ENCODE measurements at regions of chr22 and their contacts with region 1.

Region 1: DNA sequence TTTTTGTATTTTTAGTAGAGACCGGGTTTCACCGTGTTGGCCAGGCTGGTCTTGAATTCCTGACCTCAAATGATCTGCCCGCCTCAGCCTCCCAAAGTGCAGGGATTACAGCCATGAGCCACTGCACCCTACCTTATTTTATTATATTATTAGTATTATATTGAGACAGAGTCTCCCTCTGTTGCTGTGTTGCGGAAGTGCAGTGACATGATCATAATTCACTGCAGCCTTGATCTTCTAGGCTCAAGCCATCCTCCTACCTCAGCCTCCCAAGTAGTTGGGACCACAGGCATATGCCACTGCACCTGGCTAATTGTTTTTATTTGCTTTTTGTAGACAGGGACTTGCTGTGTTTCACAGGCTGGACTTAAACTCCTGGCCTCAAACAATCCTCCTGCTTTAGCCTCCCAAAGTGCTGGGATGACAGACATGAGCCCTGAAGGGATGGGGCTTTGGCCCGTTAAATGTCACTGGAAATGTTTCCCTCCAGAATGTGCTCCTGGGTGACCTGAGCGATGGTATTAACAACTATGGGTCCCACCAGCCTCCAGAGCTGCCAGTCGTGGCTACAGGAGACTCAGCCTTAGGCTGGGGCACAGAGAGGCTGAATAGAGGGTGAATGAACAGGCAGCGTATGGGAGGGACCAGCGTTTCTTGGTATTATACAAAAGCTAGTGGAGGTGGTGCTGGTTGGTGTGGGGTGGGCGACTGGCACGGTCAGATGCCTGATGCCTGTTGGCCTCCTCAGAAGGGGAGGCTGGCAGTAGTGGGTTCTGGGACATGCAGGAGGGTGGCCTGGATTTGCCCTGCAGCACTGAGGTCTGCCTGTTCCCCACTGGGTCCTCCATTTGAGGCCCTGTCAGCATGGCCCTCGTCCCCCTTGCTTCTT is 7.3 kb downstream of the TANGO2 start:
- DNase-seq: peak in 1 of 2 experiments; percentile 15
- ATAC-seq: peak; percentile 46 to 80; a peak in 3 of 6 replicates
- H3K4me3 ChIP-seq: no peak overlapping the region
- H3K27ac ChIP-seq: no peak overlapping the region
- H3K4me1 ChIP-seq: no peaks in the 10 kb centered on the region
- CTCF ChIP-seq: peak; percentile 17; the same call in 1 of the 3 replicates
- EP300 ChIP-seq: no peak
- POLR2A ChIP-seq: no peak
- RAD21 ChIP-seq: peak; percentile 31 to 41; a peak in 2 of 5 replicates

Region 2: DNA sequence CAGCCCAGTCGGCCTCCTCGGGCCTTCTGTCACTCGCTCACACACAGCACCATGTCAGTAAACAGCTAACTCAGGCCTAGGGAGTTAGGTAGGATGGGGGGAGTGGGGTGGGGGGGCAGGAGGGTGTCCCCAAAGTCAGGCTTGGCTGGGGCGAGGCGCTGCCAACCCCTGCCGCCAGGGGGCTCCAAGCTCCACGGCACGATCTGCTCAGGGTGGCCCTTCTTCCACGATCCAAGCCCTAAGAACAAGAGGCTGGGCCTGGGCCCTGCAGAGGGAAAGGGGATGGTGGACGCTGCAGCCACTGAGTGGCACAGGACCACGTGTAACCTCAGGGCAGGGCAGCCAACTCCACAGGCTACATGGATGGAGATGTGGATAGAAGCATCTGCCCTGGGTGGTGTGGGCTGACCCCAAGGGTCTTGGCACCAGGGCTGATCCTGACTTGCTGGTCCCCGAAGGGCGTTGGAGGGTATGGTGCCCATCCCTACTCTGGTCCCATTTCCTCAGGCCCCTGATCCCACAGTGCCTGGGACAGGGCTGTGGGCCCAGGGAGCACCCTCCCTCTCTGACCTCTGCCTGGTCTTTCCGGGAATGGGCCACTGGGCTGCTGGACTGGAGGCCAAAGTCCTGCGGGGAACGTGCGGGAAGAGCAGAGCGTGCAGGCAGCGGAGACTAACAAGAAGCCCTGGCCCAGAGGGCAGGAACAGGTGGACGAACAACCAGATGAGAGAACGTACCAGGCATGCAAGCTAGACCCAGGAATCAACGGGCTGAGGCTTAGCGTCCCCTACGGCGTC is 57.5 kb before region 1 on chr22:
- CTCF ChIA-PET with region 1: interaction called, 30 read pairs
- POLR2A ChIA-PET with region 1: no interaction called
- DNase-seq: peak; percentile 57 to 62
- ATAC-seq: peak; percentile 44 to 79
- H3K4me3 ChIP-seq: no peak overlapping the region
- H3K27ac ChIP-seq: no peak overlapping the region
- H3K4me1 ChIP-seq: peaks cover 5% of the 10 kb centered on the region; the same call in 1 of the 3 replicates
- CTCF ChIP-seq: peak; percentile 70
- EP300 ChIP-seq: no peak
- POLR2A ChIP-seq: no peak
- RAD21 ChIP-seq: peak; percentile 72 to 76

Region 3: GRCh38 chr22:20039683-20040325 is 11.6 kb after region 1 on chr22:
- CTCF ChIA-PET with region 1: interaction called, 10 read pairs
- POLR2A ChIA-PET with region 1: no interaction called
- DNase-seq: no peak
- ATAC-seq: no peak
- H3K4me3 ChIP-seq: no peak overlapping the region
- H3K27ac ChIP-seq: no peak overlapping the region
- H3K4me1 ChIP-seq: no peaks in the 10 kb centered on the region
- CTCF ChIP-seq: no peak
- EP300 ChIP-seq: no peak
- POLR2A ChIP-seq: no peak
- RAD21 ChIP-seq: no peak